Heart right ventricle (tissue), 16 donors: ENCODE measurements at regions of chr19 and their contacts with region 1.

Region 1: DNA sequence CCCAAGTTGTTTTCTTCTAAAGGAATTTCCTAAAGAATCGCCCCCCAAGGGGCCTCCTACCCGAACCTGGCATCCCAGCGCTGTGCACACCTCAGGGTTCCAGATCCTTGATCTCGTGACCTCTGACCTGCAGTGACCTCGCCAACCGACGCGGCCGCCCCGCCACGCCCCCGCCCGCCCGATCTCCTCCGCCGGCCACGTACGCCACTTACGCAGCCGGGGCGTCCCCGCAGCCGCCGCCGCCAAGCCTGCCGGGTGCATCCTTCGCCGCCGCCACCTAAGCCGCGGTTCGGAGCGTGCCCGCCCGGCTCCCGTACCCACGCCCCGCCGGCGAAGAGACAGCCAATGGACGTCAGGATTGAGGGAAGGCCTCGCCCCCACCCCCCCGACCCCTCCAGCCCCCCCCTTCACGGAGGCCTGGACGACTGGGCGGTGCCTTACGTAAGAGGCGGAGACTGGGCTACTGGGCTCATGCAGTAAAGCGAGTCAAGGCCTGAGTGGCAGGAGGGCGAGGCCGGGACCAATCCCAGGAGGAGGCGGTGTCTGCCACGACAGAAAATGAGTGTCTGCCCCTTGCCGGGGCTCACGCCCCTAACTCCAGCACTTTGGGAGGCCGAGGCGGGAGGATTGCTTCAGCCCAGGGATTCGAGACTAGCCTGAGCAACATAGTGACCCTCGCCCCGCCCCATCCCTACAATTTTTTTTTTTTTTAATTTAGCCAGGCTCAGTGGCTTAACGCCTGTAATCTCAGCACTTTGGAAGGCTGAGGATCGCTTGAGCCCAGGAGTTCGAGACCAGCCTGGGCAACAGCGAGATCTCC is at the start of gene YIF1B:
- DNase-seq: peak; percentile 95 to 97
- ATAC-seq: peak; percentile 94 to 97 (median 96)
- H3K4me3 ChIP-seq: peak within 1 kb of the TSS; percentile 47 to 84 (median 70)
- H3K27ac ChIP-seq: peak within 1 kb of the TSS; percentile 40 to 92 (median 82)
- H3K4me1 ChIP-seq: peaks cover 3 to 72% (median 48%) of the 10 kb centered on the region in 9 donors
- H3K27me3 ChIP-seq: no peaks in the 10 kb centered on the region
- CTCF ChIP-seq: peak in 2 of 9 donors; percentile 7 to 13
- total RNA-seq, gene YIF1B: 24.3 to 42.9 (median 30.2) TPM

Region 2: GRCh38 chr19:36665832-36666231 is 1650.0 kb before region 1 on chr19:
- intact Hi-C with region 1: loop called in 1 of 10 experiments (anchors 5 kb)
- DNase-seq: no peak
- ATAC-seq: no peak
- H3K4me3 ChIP-seq: peak overlapping the region in 9 of 10 donors; percentile 65 to 89 (median 82)
- H3K27ac ChIP-seq: peak overlapping the region in 1 of 10 donors; percentile 88
- H3K4me1 ChIP-seq: peaks cover 0 to 23% (median 16%) of the 10 kb centered on the region in 9 donors
- H3K27me3 ChIP-seq: no peaks in the 10 kb centered on the region
- CTCF ChIP-seq: no peak

Region 3: GRCh38 chr19:38142176-38143035 is 173.5 kb before region 1 on chr19:
- intact Hi-C with region 1: loop called in 1 of 10 experiments (anchors 10 kb)
- DNase-seq: peak; percentile 64
- ATAC-seq: peak in 7 of 8 donors; percentile 50 to 82 (median 76)
- H3K4me3 ChIP-seq: no peak overlapping the region
- H3K27ac ChIP-seq: no peak overlapping the region
- H3K4me1 ChIP-seq: no peaks in the 10 kb centered on the region
- H3K27me3 ChIP-seq: no peaks in the 10 kb centered on the region
- CTCF ChIP-seq: peak; percentile 29 to 75 (median 68)

Region 4: DNA sequence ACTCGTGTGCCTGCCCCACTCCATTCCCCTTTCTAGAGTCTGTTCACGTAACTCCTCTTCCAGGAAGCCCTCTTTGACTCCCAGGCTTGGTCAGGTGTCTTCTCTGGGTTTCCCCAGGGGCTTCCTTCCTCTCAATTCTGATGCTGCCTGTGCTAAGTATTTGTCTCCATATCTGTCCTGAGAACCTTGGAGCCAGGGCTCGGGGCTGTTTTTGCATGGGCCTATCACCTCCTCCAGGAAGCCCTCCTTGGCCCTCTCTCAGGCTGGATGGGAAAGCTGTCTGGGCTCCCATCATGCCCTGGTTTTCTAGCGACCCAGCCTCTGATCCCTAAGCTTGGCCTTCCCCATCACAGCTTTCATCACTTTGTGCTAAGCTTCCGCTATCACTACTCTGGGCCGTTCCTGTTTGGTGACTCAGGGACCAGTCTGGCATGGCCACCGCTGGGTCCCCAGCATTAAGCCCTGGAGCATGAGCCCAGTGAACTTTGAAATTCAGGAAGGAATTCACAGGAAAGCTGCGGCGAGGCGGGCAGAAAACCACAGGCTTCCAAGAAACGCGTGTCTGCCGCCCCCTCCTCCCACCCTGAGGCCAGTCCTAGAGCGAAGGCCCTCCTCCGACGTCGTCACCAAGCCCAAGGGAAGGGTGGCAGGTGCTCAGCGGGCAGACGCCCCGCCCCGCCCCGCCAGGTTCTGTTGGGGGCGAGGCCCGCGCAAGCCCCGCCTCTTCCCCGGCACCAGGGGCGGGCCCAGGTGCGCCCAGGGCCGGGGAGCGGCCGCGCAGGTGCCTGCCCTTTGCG is 52.0 kb before region 1 on chr19:
- intact Hi-C with region 1: loop called in 2 of 10 experiments (anchors 5 to 10 kb)
- DNase-seq: no peak
- ATAC-seq: peak; percentile 48 to 85 (median 66)
- H3K4me3 ChIP-seq: peak overlapping the region; percentile 53 to 71 (median 64)
- H3K27ac ChIP-seq: peak overlapping the region in 8 of 10 donors; percentile 29 to 92 (median 54)
- H3K4me1 ChIP-seq: peaks cover 5 to 22% (median 12%) of the 10 kb centered on the region in 9 donors
- H3K27me3 ChIP-seq: peaks cover 0 to 3% (median 0%) of the 10 kb centered on the region in 7 donors
- CTCF ChIP-seq: no peak

Region 5: GRCh38 chr19:38277969-38278680 is 37.7 kb before region 1 on chr19:
- intact Hi-C with region 1: loop called in 8 of 10 experiments (anchors 1 to 5 kb)
- DNase-seq: peak; percentile 61 to 85
- ATAC-seq: peak; percentile 88 to 95 (median 94)
- H3K4me3 ChIP-seq: peak overlapping the region in 3 of 10 donors; percentile 13 to 16 (median 16)
- H3K27ac ChIP-seq: peak overlapping the region; percentile 64 to 92 (median 84)
- H3K4me1 ChIP-seq: peaks cover 12 to 87% (median 59%) of the 10 kb centered on the region in 9 donors
- H3K27me3 ChIP-seq: no peaks in the 10 kb centered on the region
- CTCF ChIP-seq: no peak

Region 6: GRCh38 chr19:38346837-38347236 is 31.0 kb after region 1 on chr19:
- intact Hi-C with region 1: no loop called
- DNase-seq: no peak
- ATAC-seq: no peak
- H3K4me3 ChIP-seq: no peak overlapping the region
- H3K27ac ChIP-seq: no peak overlapping the region
- H3K4me1 ChIP-seq: no peaks in the 10 kb centered on the region
- H3K27me3 ChIP-seq: no peaks in the 10 kb centered on the region
- CTCF ChIP-seq: no peak